ENCODE measurements at regions of chr1 and their contacts with region 1.

Region 1: GRCh38 chr1:41573785-41574713 is 89.6 kb upstream of the EDN2 start:
- DNase-seq: peak; percentile 33 to 86
- H3K4me3 ChIP-seq: no peak overlapping the region
- H3K27ac ChIP-seq: no peak overlapping the region
- H3K4me1 ChIP-seq: no peaks in the 10 kb centered on the region; a peak in 2 of 7 replicates
- H3K27me3 ChIP-seq: no peaks in the 10 kb centered on the region; a peak in 1 of 7 replicates
- CTCF ChIP-seq: peak; percentile 87 to 97 (median 94)
- EP300 ChIP-seq: no peak
- POLR2A ChIP-seq: no peak
- RAD21 ChIP-seq: peak; percentile 98 to 99

Region 2: GRCh38 chr1:41226815-41227434 is 347.1 kb before region 1 on chr1:
- CTCF ChIA-PET with region 1: no interaction called
- POLR2A ChIA-PET with region 1: no interaction called
- DNase-seq: no peak
- H3K4me3 ChIP-seq: no peak overlapping the region
- H3K27ac ChIP-seq: no peak overlapping the region
- H3K4me1 ChIP-seq: peaks cover 0 to 4% (median 0%) of the 10 kb centered on the region in 4 experiments; a peak in 1 of 7 replicates
- H3K27me3 ChIP-seq: no peaks in the 10 kb centered on the region
- CTCF ChIP-seq: no peak
- EP300 ChIP-seq: no peak
- POLR2A ChIP-seq: no peak
- RAD21 ChIP-seq: no peak

Region 3: DNA sequence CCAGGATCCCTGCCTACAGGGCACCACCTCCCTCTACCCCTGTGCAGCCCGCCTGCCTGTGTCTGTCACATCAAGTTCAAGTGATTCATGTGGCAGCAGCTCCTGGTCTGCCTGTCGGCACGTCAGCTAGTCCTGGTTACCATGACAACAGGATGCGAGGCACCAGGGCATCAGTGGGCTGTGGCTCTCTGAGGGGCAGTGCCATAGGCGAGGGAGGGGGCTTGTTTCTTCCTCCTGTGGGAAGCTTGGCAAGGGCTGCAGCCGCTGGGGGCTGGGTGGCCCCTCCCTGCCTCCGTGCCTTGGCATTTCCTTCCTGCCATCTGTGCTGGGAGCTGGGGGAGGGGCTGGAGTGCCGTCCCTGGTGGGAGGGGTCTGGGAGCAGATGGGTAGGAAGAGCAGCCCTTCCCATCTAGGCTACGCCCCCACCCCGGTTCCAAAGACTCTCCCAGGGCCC is 169.7 kb before region 1 on chr1:
- CTCF ChIA-PET with region 1: no interaction called
- POLR2A ChIA-PET with region 1: no interaction called
- DNase-seq: peak in 1 of 2 experiments; percentile 76
- H3K4me3 ChIP-seq: peak overlapping the region in 1 of 4 experiments; percentile 25; a peak in 1 of 8 replicates
- H3K27ac ChIP-seq: no peak overlapping the region
- H3K4me1 ChIP-seq: peaks cover 4 to 27% (median 14%) of the 10 kb centered on the region in 4 experiments
- H3K27me3 ChIP-seq: peaks cover 0 to 5% (median 2%) of the 10 kb centered on the region in 4 experiments; a peak in 4 of 7 replicates
- CTCF ChIP-seq: no peak
- EP300 ChIP-seq: no peak
- POLR2A ChIP-seq: no peak
- RAD21 ChIP-seq: no peak

Region 4: GRCh38 chr1:41516168-41517061 is 57.6 kb before region 1 on chr1:
- CTCF ChIA-PET with region 1: interaction called, 12 read pairs
- POLR2A ChIA-PET with region 1: no interaction called
- DNase-seq: peak; percentile 62 to 99
- H3K4me3 ChIP-seq: peak overlapping the region; percentile 5 to 56 (median 30); a peak in 6 of 8 replicates
- H3K27ac ChIP-seq: no peak overlapping the region
- H3K4me1 ChIP-seq: peaks cover 6 to 8% (median 8%) of the 10 kb centered on the region in 4 experiments
- H3K27me3 ChIP-seq: peaks cover 0 to 9% (median 5%) of the 10 kb centered on the region in 4 experiments; a peak in 5 of 7 replicates
- CTCF ChIP-seq: peak; percentile 87 to 93 (median 88)
- EP300 ChIP-seq: no peak
- POLR2A ChIP-seq: no peak
- RAD21 ChIP-seq: peak; percentile 73 to 77

Region 5: GRCh38 chr1:41589395-41589794 is 15.3 kb after region 1 on chr1:
- CTCF ChIA-PET with region 1: interaction called, 33 read pairs
- POLR2A ChIA-PET with region 1: no interaction called
- DNase-seq: no peak
- H3K4me3 ChIP-seq: no peak overlapping the region
- H3K27ac ChIP-seq: no peak overlapping the region
- H3K4me1 ChIP-seq: no peaks in the 10 kb centered on the region
- H3K27me3 ChIP-seq: no peaks in the 10 kb centered on the region; a peak in 1 of 7 replicates
- CTCF ChIP-seq: no peak
- EP300 ChIP-seq: no peak
- POLR2A ChIP-seq: no peak
- RAD21 ChIP-seq: no peak

Region 6: GRCh38 chr1:41613689-41614574 is 39.9 kb after region 1 on chr1:
- CTCF ChIA-PET with region 1: interaction called, 11 read pairs
- POLR2A ChIA-PET with region 1: no interaction called
- DNase-seq: peak in 1 of 2 experiments; percentile 6
- H3K4me3 ChIP-seq: no peak overlapping the region
- H3K27ac ChIP-seq: no peak overlapping the region
- H3K4me1 ChIP-seq: peaks cover 0 to under 1% (median 0%) of the 10 kb centered on the region in 4 experiments; a peak in 2 of 7 replicates
- H3K27me3 ChIP-seq: no peaks in the 10 kb centered on the region; a peak in 2 of 7 replicates
- CTCF ChIP-seq: no peak
- EP300 ChIP-seq: no peak
- POLR2A ChIP-seq: no peak
- RAD21 ChIP-seq: no peak

Region 7: GRCh38 chr1:41776891-41777441 is 202.9 kb after region 1 on chr1:
- CTCF ChIA-PET with region 1: interaction called, 11 read pairs
- POLR2A ChIA-PET with region 1: no interaction called
- DNase-seq: no peak
- H3K4me3 ChIP-seq: no peak overlapping the region
- H3K27ac ChIP-seq: no peak overlapping the region
- H3K4me1 ChIP-seq: peaks cover 0 to 7% (median 0%) of the 10 kb centered on the region in 4 experiments; a peak in 6 of 7 replicates
- H3K27me3 ChIP-seq: no peaks in the 10 kb centered on the region
- CTCF ChIP-seq: no peak
- EP300 ChIP-seq: no peak
- POLR2A ChIP-seq: no peak
- RAD21 ChIP-seq: no peak

Region 8: GRCh38 chr1:42173155-42173933 is 599.3 kb after region 1 on chr1:
- CTCF ChIA-PET with region 1: interaction called, 16 read pairs
- POLR2A ChIA-PET with region 1: no interaction called
- DNase-seq: peak in 1 of 2 experiments; percentile 91
- H3K4me3 ChIP-seq: no peak overlapping the region
- H3K27ac ChIP-seq: no peak overlapping the region
- H3K4me1 ChIP-seq: peaks cover 0 to 7% (median 3%) of the 10 kb centered on the region in 4 experiments; a peak in 2 of 7 replicates
- H3K27me3 ChIP-seq: no peaks in the 10 kb centered on the region
- CTCF ChIP-seq: peak; percentile 82 to 97 (median 97)
- EP300 ChIP-seq: no peak
- POLR2A ChIP-seq: peak in 1 of 2 experiments; percentile 29; a peak in 1 of 3 replicates
- RAD21 ChIP-seq: peak; percentile 63 to 70